ENCODE measurements at regions of chr10 and their contacts with region 1.

Region 1: GRCh38 chr10:11875494-11876281 is 52.5 kb downstream of the PROSER2 start:
- DNase-seq: no peak
- H3K4me3 ChIP-seq: no peak overlapping the region; a peak in 1 of 8 replicates
- H3K27ac ChIP-seq: peak overlapping the region; percentile 69
- H3K4me1 ChIP-seq: peaks cover 6 to 16% (median 14%) of the 10 kb centered on the region in 4 experiments
- H3K27me3 ChIP-seq: no peaks in the 10 kb centered on the region
- CTCF ChIP-seq: no peak
- EP300 ChIP-seq: no peak
- POLR2A ChIP-seq: no peak
- RAD21 ChIP-seq: no peak

Region 2: GRCh38 chr10:11684717-11685645 is 190.7 kb before region 1 on chr10:
- CTCF ChIA-PET with region 1: no interaction called
- POLR2A ChIA-PET with region 1: no interaction called
- DNase-seq: peak in 1 of 2 experiments; percentile 5
- H3K4me3 ChIP-seq: no peak overlapping the region
- H3K27ac ChIP-seq: no peak overlapping the region
- H3K4me1 ChIP-seq: peaks cover 0 to 11% (median 3%) of the 10 kb centered on the region in 4 experiments; a peak in 3 of 7 replicates
- H3K27me3 ChIP-seq: no peaks in the 10 kb centered on the region; a peak in 1 of 7 replicates
- CTCF ChIP-seq: no peak
- EP300 ChIP-seq: no peak
- POLR2A ChIP-seq: no peak
- RAD21 ChIP-seq: no peak

Region 3: DNA sequence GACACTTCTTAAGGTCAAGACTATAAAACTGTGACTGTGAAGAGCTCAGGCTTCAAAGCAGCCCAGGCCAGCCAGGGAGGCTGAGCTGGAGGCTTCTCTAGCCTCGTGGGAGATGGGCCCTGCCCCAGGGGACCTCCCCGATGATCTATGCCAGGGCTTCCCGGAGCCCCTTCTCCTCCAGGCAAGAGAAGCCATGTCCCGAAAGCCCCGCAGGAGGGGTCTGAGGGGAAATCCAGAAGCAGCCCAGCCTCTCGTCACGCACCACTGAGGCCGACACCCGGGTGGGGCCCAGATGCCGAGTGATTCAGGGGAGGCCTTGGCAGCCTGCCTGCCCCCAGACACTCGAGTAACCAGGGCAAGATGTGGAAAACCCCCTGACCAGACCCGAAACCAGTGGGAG is 11.2 kb after region 1 on chr10:
- CTCF ChIA-PET with region 1: interaction called, 10 read pairs
- POLR2A ChIA-PET with region 1: interaction called, 6 read pairs
- DNase-seq: no peak
- H3K4me3 ChIP-seq: no peak overlapping the region
- H3K27ac ChIP-seq: no peak overlapping the region
- H3K4me1 ChIP-seq: no peaks in the 10 kb centered on the region
- H3K27me3 ChIP-seq: no peaks in the 10 kb centered on the region; a peak in 1 of 7 replicates
- CTCF ChIP-seq: no peak
- EP300 ChIP-seq: no peak
- POLR2A ChIP-seq: no peak
- RAD21 ChIP-seq: no peak

Region 4: DNA sequence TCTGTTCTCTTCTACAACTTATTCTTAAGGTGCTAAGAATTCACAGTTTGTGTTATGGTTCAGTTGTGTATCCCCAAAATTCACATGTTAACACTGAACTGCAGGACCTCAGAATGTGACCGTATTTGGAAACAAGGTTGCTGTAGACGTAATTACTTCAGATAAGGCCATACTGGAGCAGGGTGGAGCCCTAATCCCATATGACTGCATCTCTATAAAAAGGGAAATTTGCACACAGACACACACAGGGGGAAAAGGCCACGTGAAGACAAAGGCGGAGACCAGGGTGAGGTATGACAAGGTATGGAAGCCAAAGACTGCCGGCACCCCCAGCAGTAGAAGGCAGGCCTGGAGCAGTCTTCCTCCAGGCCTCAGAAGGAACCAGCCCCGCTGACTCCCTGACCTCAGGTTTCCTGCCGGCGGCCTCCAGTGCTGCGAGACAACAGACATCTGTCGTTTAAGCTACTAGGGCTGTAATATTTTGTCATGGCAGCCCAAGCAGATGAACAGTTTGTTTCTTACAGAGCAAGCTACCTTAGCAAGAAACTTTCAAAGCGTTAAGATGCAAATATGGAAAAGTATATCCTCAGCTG is 46.2 kb after region 1 on chr10:
- CTCF ChIA-PET with region 1: no interaction called
- POLR2A ChIA-PET with region 1: no interaction called
- DNase-seq: peak in 1 of 2 experiments; percentile 31
- H3K4me3 ChIP-seq: no peak overlapping the region
- H3K27ac ChIP-seq: peak overlapping the region; percentile 25; the same call in 1 of the 2 replicates
- H3K4me1 ChIP-seq: no peaks in the 10 kb centered on the region; a peak in 2 of 7 replicates
- H3K27me3 ChIP-seq: no peaks in the 10 kb centered on the region
- CTCF ChIP-seq: no peak
- EP300 ChIP-seq: no peak
- POLR2A ChIP-seq: no peak
- RAD21 ChIP-seq: no peak

Region 5: DNA sequence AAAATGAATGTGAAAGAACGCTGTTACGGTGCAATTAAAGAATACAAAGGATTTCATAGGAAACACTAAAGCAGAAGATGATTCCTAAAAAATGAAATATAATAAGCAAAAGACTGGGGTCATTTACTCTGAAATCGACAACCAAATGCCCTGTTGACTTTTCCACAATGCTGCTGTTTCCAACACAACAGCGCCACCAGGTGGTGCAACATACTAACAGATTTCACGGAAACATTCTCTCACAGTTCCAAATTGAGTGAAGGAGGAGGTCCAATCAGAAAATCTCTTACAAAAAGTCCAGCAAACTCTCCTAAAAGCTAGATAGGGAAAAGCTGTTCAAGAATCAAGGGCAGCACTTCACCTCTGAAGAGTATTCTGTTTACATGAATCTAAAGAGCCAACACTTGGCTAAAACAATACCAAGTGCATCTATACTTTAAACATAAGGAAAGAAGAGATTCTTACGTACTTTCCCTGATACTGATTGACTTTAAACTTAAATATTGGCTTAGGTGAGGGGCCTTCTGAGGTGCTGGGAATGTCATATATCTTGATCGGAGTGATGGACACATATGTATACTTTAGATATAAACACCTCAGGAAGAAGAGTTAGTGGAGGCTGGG is 111.0 kb after region 1 on chr10:
- CTCF ChIA-PET with region 1: interaction called, 21 read pairs
- POLR2A ChIA-PET with region 1: no interaction called
- DNase-seq: peak; percentile 27 to 84
- H3K4me3 ChIP-seq: no peak overlapping the region
- H3K27ac ChIP-seq: no peak overlapping the region
- H3K4me1 ChIP-seq: no peaks in the 10 kb centered on the region
- H3K27me3 ChIP-seq: no peaks in the 10 kb centered on the region
- CTCF ChIP-seq: peak; percentile 37 to 90 (median 82)
- EP300 ChIP-seq: no peak
- POLR2A ChIP-seq: no peak
- RAD21 ChIP-seq: peak; percentile 96

Region 6: DNA sequence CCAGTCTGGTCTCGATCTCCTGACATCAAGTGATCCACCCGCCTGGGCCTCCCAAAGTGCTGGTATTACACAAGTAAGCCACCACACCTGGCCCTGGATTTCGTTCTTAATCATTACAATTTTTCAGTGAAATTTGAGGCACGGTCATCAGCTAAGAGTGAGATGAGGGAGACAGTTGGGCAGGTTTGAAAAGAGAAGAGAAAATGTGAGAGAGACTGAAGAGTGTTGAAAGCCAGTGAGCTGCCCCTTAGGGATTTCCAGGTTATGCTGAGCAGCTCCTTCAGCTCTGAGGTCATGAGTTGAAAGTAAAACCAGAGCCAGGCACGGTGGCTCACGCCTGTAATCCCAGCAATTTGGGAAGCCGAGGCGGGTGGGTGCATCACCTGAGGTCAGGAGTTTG is 172.9 kb after region 1 on chr10:
- CTCF ChIA-PET with region 1: no interaction called
- POLR2A ChIA-PET with region 1: no interaction called
- DNase-seq: no peak
- H3K4me3 ChIP-seq: no peak overlapping the region
- H3K27ac ChIP-seq: no peak overlapping the region
- H3K4me1 ChIP-seq: no peaks in the 10 kb centered on the region; a peak in 1 of 7 replicates
- H3K27me3 ChIP-seq: no peaks in the 10 kb centered on the region
- CTCF ChIP-seq: no peak
- EP300 ChIP-seq: no peak
- POLR2A ChIP-seq: no peak
- RAD21 ChIP-seq: no peak